ENCODE measurements at regions of chr1 and their contacts with region 1.

Region 1: DNA sequence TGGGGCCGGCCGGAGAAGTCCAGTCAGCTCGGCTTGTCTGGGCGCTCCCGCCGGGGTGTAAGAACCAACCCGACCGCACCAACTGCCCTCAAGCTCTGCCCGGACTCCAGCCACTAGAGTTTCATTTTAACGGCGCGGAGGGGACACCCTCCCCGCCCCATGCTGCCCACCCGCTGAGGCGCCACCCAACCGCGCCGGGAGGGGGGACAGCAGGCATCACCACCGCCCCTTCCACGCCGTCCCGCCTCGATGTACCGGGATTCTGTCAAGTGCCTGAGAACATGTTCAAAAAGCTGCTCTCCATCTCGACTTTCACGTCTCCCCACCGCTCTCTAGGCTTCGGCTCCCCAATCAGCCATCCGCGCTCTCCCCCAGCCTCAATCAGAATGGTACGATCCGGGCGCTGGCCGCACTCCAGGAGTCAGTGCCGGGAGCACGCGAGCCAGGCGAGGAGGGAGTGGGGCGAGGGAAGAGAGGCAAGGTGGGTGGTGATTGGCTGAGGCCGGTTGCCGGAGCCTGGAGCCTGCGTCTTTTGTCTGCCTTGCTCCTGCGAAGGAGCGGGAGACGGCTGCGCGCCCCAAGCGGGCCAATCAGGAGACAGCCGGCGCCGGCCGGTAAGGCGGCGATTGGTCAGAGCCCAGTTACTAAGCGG is at the start of gene PIK3R3:
- DNase-seq: peak; percentile 94
- ATAC-seq: peak; percentile 98
- H3K4me3 Mint-ChIP-seq: peak within 1 kb of the TSS; percentile 74
- H3K27ac Mint-ChIP-seq: peak within 1 kb of the TSS; percentile 87
- H3K4me1 Mint-ChIP-seq: peaks cover 21% of the 10 kb centered on the region
- H3K27me3 Mint-ChIP-seq: peaks cover 51% of the 10 kb centered on the region
- total RNA-seq, gene PIK3R3: 0.46 to 0.78 TPM

Region 2: DNA sequence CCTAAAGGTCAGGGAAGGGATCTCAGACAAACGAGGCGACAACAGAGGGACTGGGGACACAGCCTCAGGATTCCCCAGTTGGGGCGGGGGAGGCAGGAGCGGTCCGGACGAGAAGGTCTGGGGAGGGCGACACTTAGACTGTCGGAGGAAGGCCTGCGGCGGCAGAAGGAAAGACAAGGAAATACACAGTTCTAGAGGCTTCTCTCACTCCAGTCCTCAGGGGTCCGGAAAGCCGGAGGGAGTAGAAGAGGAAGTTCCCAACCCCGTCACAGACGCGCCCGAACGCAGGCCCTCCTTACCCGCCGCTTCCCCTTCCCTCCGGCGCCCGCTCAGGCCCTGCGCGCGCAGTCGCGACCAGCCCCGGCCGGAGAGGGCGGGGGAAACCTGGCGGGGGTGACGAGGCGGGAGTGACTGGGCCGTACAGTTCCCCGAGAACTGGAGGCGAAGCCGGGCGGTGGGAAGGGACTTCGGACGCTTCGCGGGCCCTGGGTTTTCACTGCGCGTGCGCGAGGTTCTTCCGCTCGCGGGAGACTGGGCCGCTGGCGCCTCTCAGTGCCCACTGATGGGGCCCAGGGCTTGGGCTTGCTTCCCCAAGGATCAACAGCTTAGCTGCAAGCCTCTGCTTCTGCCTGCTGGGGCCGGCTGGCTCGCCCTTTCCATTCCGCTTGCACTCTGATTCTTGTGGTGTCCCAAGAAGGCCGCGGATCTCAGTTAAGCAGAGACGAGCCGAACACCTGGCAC is 382.2 kb before region 1 on chr1 and contains the start of gene IPP:
- CTCF ChIA-PET with region 1: no interaction called
- POLR2A ChIA-PET with region 1: no interaction called
- intact Hi-C with region 1: loop called in 1 of 2 experiments (anchors 1 kb)
- DNase-seq: peak; percentile 97
- ATAC-seq: peak; percentile 99
- H3K4me3 Mint-ChIP-seq: peak within 1 kb of the TSS; percentile 93
- H3K27ac Mint-ChIP-seq: peak within 1 kb of the TSS; percentile 95
- H3K4me1 Mint-ChIP-seq: peaks cover 27% of the 10 kb centered on the region
- H3K27me3 Mint-ChIP-seq: no peaks in the 10 kb centered on the region
- total RNA-seq, gene IPP: 11.6 to 21.8 TPM

Region 3: DNA sequence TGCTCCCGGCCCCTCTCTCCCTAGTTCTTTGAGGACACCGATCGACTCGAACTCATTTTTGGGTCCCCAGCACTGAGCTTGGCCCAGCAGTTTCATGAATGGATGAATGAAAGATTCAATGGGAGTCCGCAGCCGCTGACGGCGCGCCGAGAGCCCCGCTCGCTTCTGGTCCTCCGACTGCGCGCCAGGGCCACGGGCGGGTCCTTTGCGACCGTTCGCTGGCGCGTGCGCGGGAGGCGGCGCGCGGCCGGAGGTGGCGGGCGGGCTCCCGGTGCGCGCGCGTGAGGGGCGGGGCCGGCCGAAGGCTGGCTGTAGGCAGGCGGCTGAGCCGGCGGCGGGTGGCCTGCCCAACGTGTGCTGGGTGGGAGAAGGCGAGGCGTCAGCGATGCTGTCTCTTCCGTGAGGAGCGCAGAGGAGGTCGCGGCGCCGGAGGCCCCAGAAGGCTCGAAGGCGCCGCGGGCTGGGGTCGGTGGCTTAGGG is 329.3 kb before region 1 on chr1 and contains the start of gene MAST2:
- CTCF ChIA-PET with region 1: no interaction called
- POLR2A ChIA-PET with region 1: no interaction called
- intact Hi-C with region 1: loop called in 1 of 2 experiments (anchors 5 kb)
- DNase-seq: peak; percentile 92
- ATAC-seq: peak; percentile 96
- H3K4me3 Mint-ChIP-seq: peak within 1 kb of the TSS; percentile 98
- H3K27ac Mint-ChIP-seq: peak within 1 kb of the TSS; percentile 82
- H3K4me1 Mint-ChIP-seq: peaks cover 27% of the 10 kb centered on the region
- H3K27me3 Mint-ChIP-seq: no peaks in the 10 kb centered on the region
- total RNA-seq, gene MAST2: 20.1 to 22.9 TPM

Region 4: GRCh38 chr1:46094474-46095005 is 38.1 kb before region 1 on chr1:
- CTCF ChIA-PET with region 1: no interaction called
- POLR2A ChIA-PET with region 1: no interaction called
- intact Hi-C with region 1: loop called (anchors 2 to 5 kb)
- DNase-seq: no peak
- ATAC-seq: no peak
- H3K4me3 Mint-ChIP-seq: no peak overlapping the region
- H3K27ac Mint-ChIP-seq: no peak overlapping the region
- H3K4me1 Mint-ChIP-seq: peaks cover 18% of the 10 kb centered on the region
- H3K27me3 Mint-ChIP-seq: peaks cover 6% of the 10 kb centered on the region

Region 5: GRCh38 chr1:46166521-46167462 is 34.1 kb after region 1 on chr1:
- CTCF ChIA-PET with region 1: interaction called, 4 read pairs
- POLR2A ChIA-PET with region 1: no interaction called
- intact Hi-C with region 1: loop called in 1 of 2 experiments (anchors 2 kb)
- DNase-seq: peak; percentile 71
- ATAC-seq: peak; percentile 76
- H3K4me3 Mint-ChIP-seq: peak overlapping the region; percentile 65
- H3K27ac Mint-ChIP-seq: peak overlapping the region; percentile 85
- H3K4me1 Mint-ChIP-seq: peaks cover 17% of the 10 kb centered on the region
- H3K27me3 Mint-ChIP-seq: no peaks in the 10 kb centered on the region

Region 6: DNA sequence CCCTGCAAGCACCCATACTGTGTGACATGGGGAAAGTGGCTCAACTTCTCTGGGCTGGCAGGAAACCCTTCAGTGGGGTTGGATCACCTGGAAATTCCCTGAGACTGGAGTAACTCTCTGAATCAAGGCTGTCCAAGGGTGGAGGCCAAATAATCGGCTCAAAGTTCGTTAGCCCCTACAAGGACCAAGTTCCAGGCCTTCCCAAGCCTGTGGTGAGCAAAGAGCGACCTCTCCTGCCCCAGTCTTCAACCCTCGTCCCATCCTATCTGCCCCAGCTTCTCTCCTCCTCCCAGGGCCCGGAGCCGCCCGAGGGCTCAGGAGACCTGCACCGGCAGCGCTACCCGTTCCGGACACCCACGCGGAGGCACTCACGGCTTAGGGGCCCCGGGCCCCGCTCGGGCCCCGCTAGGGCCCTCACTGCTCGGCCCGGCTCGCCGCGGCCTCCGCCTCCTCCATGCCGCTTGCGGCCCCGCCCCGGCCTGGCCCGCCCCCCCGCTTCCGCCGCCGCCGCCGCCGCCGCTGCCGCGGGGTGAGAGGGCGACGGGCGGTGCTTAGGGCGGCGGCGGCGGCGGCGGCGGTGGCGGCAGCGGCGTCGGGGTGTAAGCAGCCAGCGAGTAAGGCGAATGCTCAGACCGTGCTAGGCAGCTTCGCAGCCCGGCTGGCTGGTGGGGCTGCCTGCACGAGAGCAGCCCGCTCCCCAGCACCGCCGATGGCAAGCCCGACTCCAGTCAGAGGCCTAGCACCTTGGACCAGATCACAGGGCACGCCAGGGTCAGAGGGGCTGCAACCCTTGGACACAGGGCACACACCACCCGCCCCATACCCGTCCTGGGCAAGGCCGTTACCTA is 65.5 kb after region 1 on chr1 and contains the start of gene POMGNT1:
- CTCF ChIA-PET with region 1: no interaction called
- POLR2A ChIA-PET with region 1: no interaction called
- intact Hi-C with region 1: loop called in 1 of 2 experiments (anchors 1 kb)
- DNase-seq: peak; percentile 87
- ATAC-seq: peak; percentile 94
- H3K4me3 Mint-ChIP-seq: peak within 1 kb of the TSS; percentile 84
- H3K27ac Mint-ChIP-seq: peak within 1 kb of the TSS; percentile 82
- H3K4me1 Mint-ChIP-seq: peaks cover 19% of the 10 kb centered on the region
- H3K27me3 Mint-ChIP-seq: peaks cover 2% of the 10 kb centered on the region
- total RNA-seq, gene POMGNT1: 36.4 to 36.5 TPM

Region 7: GRCh38 chr1:46223472-46223943 is 90.9 kb after region 1 on chr1:
- CTCF ChIA-PET with region 1: interaction called, 11 read pairs
- POLR2A ChIA-PET with region 1: no interaction called
- intact Hi-C with region 1: no loop called
- DNase-seq: peak; percentile 82
- ATAC-seq: peak; percentile 100
- H3K4me3 Mint-ChIP-seq: no peak overlapping the region
- H3K27ac Mint-ChIP-seq: no peak overlapping the region
- H3K4me1 Mint-ChIP-seq: peaks cover under 1% of the 10 kb centered on the region
- H3K27me3 Mint-ChIP-seq: no peaks in the 10 kb centered on the region